ENCODE measurements at regions of chr22 and their contacts with region 1.

Region 1: DNA sequence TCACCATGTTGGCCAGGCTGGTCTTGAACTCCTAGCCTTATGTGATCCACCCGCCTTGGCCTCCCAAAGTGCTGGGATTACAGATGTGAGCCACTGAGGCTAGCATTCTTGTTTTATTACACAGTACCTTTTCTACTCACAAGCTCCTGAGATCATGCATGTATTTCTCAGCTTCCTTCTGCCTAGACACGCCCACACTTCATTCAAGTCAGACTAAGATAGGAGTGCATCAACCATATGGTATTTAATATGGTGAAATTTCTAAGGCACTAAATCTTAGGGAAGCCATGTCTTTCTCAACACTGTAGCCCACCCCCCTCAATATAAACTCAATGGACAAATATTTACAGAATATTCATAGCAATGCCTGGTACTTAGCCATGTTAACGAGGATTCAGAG is 62.1 kb downstream of the SLC25A17 start:
- DNase-seq: peak; percentile 72
- H3K4me3 ChIP-seq: no peak overlapping the region
- H3K27ac ChIP-seq: peak overlapping the region; percentile 26
- H3K4me1 ChIP-seq: peaks cover 22% of the 10 kb centered on the region
- H3K27me3 ChIP-seq: no peaks in the 10 kb centered on the region
- CTCF ChIP-seq: no peak

Region 2: GRCh38 chr22:40541300-40541699 is 215.8 kb before region 1 on chr22:
- CTCF ChIA-PET with region 1: no interaction called
- dilution Hi-C with region 1: no loop called
- in situ Hi-C with region 1: loop called in 1 of 2 experiments (anchors 10 kb)
- intact Hi-C with region 1: no loop called
- DNase-seq: peak; percentile 99
- H3K4me3 ChIP-seq: no peak overlapping the region
- H3K27ac ChIP-seq: peak overlapping the region; percentile 81
- H3K4me1 ChIP-seq: peaks cover 30% of the 10 kb centered on the region
- H3K27me3 ChIP-seq: no peaks in the 10 kb centered on the region
- CTCF ChIP-seq: no peak

Region 3: DNA sequence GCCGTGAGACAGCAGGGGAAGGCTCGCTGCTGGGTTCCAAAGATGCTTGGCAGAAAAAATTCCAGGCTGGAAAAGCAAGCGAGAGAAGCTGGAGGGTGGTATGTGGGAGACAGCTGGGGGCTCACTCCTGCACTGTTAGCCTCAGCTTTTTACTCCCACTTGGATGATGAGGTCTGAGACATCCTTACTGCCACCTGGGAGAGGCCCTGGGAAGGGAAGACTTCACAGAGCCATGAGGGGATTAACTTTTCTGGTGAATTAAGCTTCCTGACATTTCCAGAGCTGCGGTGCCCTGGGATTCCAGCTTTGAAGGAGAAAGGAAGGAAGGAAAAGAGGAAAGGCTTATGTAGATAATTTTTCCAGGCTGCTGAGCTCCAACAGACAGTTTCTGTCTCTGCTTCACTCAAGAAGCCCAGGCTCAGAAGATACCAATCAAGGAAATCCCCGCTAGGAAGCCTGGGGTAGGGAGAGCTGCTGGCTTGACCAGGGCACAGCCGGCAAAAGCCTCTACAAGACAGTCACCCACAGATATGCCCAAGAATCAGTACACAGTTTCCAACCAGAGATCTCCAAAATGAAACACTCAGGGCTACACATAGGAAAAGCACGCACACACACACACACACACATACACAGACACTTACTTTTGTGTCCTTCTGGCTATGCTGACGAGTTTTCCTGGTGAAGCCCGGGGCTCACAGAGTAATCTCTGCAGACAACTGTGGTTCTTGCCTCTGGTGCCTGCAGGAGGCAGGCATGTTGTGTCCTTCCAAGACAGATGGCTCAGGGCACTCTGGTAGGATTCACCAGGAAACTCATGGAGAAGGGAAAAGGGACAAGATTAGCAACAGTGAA is 76.9 kb before region 1 on chr22:
- CTCF ChIA-PET with region 1: interaction called, 21 read pairs
- dilution Hi-C with region 1: no loop called
- in situ Hi-C with region 1: loop called in 1 of 2 experiments (anchors 10 kb)
- intact Hi-C with region 1: loop called (anchors 1 kb)
- DNase-seq: no peak
- H3K4me3 ChIP-seq: no peak overlapping the region
- H3K27ac ChIP-seq: no peak overlapping the region
- H3K4me1 ChIP-seq: peaks cover 27% of the 10 kb centered on the region
- H3K27me3 ChIP-seq: no peaks in the 10 kb centered on the region
- CTCF ChIP-seq: peak in 1 of 2 donors; percentile 10

Region 4: GRCh38 chr22:40703174-40703573 is 53.9 kb before region 1 on chr22:
- CTCF ChIA-PET with region 1: no interaction called
- dilution Hi-C with region 1: no loop called
- in situ Hi-C with region 1: no loop called
- intact Hi-C with region 1: no loop called
- DNase-seq: no peak
- H3K4me3 ChIP-seq: no peak overlapping the region
- H3K27ac ChIP-seq: no peak overlapping the region
- H3K4me1 ChIP-seq: no peaks in the 10 kb centered on the region
- H3K27me3 ChIP-seq: no peaks in the 10 kb centered on the region
- CTCF ChIP-seq: no peak

Region 5: GRCh38 chr22:40739721-40740120 is 17.4 kb before region 1 on chr22:
- CTCF ChIA-PET with region 1: no interaction called
- dilution Hi-C with region 1: no loop called
- in situ Hi-C with region 1: no loop called
- intact Hi-C with region 1: no loop called
- DNase-seq: peak; percentile 30
- H3K4me3 ChIP-seq: no peak overlapping the region
- H3K27ac ChIP-seq: no peak overlapping the region
- H3K4me1 ChIP-seq: no peaks in the 10 kb centered on the region
- H3K27me3 ChIP-seq: no peaks in the 10 kb centered on the region
- CTCF ChIP-seq: no peak

Region 6: DNA sequence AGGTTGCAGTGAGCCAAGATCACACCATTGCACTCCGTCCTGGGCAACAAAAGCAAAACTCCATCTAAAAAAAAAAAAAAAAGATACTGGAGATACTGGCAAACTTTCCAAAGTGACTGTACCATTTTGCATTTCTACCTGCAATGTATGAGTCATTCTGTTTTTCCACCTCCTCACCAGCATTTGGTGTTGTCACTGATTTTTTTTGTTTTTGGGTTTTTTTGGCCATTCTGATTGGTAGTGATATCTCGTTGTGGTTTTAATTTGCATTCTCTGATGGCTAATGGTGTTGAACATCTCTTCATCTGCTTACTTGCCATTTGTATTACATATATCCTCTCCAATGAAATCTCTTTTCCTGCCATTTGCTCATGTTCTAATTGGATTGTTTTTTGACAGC is 182.1 kb after region 1 on chr22:
- CTCF ChIA-PET with region 1: no interaction called
- dilution Hi-C with region 1: no loop called
- in situ Hi-C with region 1: no loop called
- intact Hi-C with region 1: no loop called
- DNase-seq: peak; percentile 54
- H3K4me3 ChIP-seq: no peak overlapping the region
- H3K27ac ChIP-seq: no peak overlapping the region
- H3K4me1 ChIP-seq: no peaks in the 10 kb centered on the region
- H3K27me3 ChIP-seq: no peaks in the 10 kb centered on the region
- CTCF ChIP-seq: no peak

Measured in mammary epithelial cell (primary cell).